HEK293 (cell line): ENCODE measurements at regions of chr5 and their contacts with region 1.

Region 1: GRCh38 chr5:76771705-76772405 is 47.0 kb upstream of the F2RL1 start:
- H3K4me3 ChIP-seq: no peak overlapping the region
- H3K27ac ChIP-seq: no peak overlapping the region
- H3K4me1 ChIP-seq: no peaks in the 10 kb centered on the region
- CTCF ChIP-seq: no peak

Region 2: DNA sequence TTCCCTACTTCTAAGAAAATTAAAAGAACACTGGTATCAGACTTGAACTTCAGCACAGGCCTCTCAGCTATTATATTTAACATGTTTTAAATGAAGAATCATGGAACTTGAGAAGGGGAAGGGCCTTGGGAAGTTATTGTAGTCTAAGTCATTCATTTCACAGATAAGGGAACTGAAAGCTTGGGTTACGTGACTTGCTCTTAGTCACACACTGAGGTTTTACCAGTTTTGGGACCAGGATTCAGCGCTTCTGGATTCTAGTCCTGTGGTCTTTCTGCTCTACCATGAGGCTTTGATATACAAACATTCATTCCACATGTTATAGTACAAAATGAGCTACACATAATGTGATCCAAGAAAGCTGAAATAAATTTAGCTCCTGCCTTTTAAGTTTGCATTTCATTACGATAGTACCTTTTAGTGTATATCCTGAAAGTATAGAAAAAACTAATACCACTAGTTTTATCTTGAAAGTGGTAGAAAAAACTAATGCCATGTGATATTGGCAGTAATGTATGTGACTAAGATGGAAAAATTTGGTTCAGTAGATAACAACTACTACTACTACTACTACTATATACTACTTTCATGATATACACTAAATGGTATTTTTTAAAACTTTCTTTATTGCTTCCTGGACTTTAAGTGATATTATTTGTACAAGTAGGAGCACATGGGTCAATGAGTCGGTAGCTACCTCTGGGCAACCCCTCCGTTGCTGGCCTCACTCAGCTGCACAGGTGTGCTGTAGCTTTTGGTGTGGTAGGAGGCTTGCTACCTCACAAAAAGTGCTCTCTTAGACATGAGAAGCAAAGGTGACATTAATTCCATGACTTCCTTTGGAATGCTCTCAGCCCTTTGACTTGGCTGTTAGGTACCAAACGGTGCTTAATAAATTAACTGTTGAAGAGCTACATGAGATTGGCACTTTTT is 189.4 kb before region 1 on chr5:
- CTCF ChIA-PET with region 1: interaction called, 12 read pairs
- POLR2A ChIA-PET with region 1: no interaction called
- H3K4me3 ChIP-seq: no peak overlapping the region
- H3K27ac ChIP-seq: no peak overlapping the region
- H3K4me1 ChIP-seq: peaks cover 12% of the 10 kb centered on the region; the same call in 1 of the 2 replicates
- CTCF ChIP-seq: no peak

Region 3: DNA sequence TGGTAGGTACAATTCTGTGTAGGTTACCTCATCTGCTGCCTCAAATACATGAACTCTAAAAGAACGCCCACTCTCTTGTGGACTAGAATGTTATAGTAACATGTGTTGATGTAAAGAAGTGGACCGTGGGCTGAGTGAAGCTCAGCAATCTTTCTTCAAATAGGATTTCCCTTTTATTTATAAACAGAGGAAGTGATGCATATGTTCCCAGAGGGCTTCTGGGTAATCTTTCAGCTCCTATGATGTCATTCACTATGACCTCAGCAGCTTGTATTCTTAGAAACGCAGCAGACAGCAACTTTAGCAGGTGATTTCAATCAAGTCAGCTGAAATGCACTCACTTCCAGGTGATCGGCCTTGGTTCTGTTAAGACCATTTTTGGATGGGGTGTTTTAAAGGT is 163.0 kb before region 1 on chr5:
- CTCF ChIA-PET with region 1: interaction called, 12 read pairs
- POLR2A ChIA-PET with region 1: no interaction called
- H3K4me3 ChIP-seq: no peak overlapping the region
- H3K27ac ChIP-seq: no peak overlapping the region
- H3K4me1 ChIP-seq: no peaks in the 10 kb centered on the region
- CTCF ChIP-seq: no peak

Region 4: GRCh38 chr5:76705574-76705973 is 66.3 kb before region 1 on chr5:
- CTCF ChIA-PET with region 1: interaction called, 13 read pairs
- POLR2A ChIA-PET with region 1: no interaction called
- H3K4me3 ChIP-seq: no peak overlapping the region
- H3K27ac ChIP-seq: no peak overlapping the region
- H3K4me1 ChIP-seq: peaks cover 10% of the 10 kb centered on the region; the same call in 1 of the 2 replicates
- CTCF ChIP-seq: no peak

Region 5: GRCh38 chr5:76742583-76742982 is 29.3 kb before region 1 on chr5:
- CTCF ChIA-PET with region 1: interaction called, 18 read pairs
- POLR2A ChIA-PET with region 1: no interaction called
- H3K4me3 ChIP-seq: no peak overlapping the region
- H3K27ac ChIP-seq: no peak overlapping the region
- H3K4me1 ChIP-seq: no peaks in the 10 kb centered on the region
- CTCF ChIP-seq: no peak

Region 6: GRCh38 chr5:76805850-76806505 is 34.1 kb after region 1 on chr5:
- CTCF ChIA-PET with region 1: interaction called, 12 read pairs
- POLR2A ChIA-PET with region 1: no interaction called
- H3K4me3 ChIP-seq: no peak overlapping the region
- H3K27ac ChIP-seq: no peak overlapping the region; the same call in 1 of the 2 replicates
- H3K4me1 ChIP-seq: peaks cover 2% of the 10 kb centered on the region
- CTCF ChIP-seq: no peak

Region 7: DNA sequence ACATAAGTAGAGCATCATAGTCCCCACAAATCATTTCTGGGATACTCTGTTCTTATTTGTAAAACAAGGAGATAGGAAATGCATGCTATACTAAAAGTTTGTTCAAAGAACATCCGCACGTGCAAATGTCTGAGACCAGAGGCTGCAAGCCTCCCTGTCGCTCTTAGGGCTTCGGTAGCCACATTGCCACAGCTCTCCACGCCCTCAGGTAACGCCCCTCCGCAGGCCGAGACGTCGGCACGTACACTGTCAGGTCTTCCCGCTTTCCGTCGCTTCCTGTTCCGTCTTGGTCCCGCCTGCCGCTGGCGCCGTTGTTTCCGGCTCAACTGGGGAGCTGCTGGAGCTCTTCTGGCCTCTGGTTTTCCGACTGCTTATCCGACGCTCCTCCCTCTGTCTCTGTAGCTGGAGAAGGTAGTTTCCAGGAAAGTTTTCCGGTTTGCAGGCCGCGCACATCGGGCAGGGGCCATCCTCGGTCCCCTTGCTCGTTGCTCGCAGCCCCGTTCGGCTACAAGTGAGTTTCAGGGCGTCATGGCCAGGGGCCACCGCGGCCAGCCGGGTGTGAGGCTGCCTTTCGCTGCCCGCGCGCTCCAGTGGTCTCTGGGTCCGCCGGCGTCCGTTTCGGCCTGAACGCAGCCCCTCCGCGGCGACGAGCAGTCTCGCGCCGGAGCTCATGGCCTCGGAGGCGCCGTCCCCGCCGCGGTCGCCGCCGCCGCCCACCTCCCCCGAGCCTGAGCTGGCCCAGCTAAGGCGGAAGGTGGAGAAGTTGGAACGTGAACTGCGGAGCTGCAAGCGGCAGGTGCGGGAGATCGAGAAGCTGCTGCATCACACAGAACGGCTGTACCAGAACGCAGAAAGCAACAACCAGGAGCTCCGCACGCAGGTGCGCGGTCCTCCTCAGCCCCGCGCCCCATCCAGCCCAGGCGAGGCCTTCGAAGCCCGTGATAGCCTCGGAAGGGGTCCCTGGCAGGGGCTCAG is 258.5 kb after region 1 on chr5 and contains the start of gene AGGF1:
- CTCF ChIA-PET with region 1: no interaction called
- POLR2A ChIA-PET with region 1: no interaction called
- H3K4me3 ChIP-seq: peak within 1 kb of the TSS; percentile 92
- H3K27ac ChIP-seq: peak within 1 kb of the TSS; percentile 91
- H3K4me1 ChIP-seq: no peaks in the 10 kb centered on the region
- CTCF ChIP-seq: 0 out of 2 replicates have a peak, but pooled peaks have one; percentile 9